ENCODE measurements at regions of chr12 and their contacts with region 1.

Region 1: GRCh38 chr12:109858764-109859163 is 21.6 kb downstream of the GLTP start:
- DNase-seq: no peak
- ATAC-seq: no peak
- H3K4me3 Mint-ChIP-seq: no peak overlapping the region
- H3K27ac Mint-ChIP-seq: no peak overlapping the region
- H3K4me1 Mint-ChIP-seq: peaks cover 4% of the 10 kb centered on the region
- H3K27me3 Mint-ChIP-seq: no peaks in the 10 kb centered on the region
- CTCF ChIP-seq: no peak

Region 2: GRCh38 chr12:109927622-109928021 is 68.9 kb after region 1 on chr12:
- CTCF ChIA-PET with region 1: interaction called, 18 read pairs
- POLR2A ChIA-PET with region 1: no interaction called
- intact Hi-C with region 1: loop called (anchors 1 kb)
- DNase-seq: no peak
- ATAC-seq: no peak
- H3K4me3 Mint-ChIP-seq: no peak overlapping the region
- H3K27ac Mint-ChIP-seq: peak overlapping the region; percentile 73
- H3K4me1 Mint-ChIP-seq: peaks cover 14% of the 10 kb centered on the region
- H3K27me3 Mint-ChIP-seq: no peaks in the 10 kb centered on the region
- CTCF ChIP-seq: no peak

Region 3: DNA sequence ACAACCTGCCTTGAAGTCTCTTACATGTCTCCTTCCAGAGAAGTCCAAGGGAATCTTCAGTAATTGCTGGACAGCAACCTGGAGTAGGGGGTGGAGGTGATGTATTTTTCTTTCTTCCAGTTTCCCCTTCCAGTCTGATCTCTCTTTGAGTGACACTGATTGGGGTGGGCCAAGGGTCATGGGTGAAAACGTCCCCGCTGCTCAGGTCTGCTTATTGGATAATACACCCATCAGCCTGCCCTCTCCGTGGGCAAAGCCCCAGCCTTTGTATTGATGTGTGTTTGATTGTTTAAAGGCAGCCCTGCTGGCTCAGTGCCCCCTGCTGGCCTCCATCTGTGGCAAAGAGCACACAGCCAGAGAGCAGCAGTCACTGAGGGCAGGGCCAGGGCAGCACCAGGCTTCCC is 386.6 kb after region 1 on chr12:
- CTCF ChIA-PET with region 1: interaction called, 3 read pairs
- POLR2A ChIA-PET with region 1: no interaction called
- intact Hi-C with region 1: loop called (anchors 10 kb)
- DNase-seq: peak; percentile 36
- ATAC-seq: peak; percentile 90
- H3K4me3 Mint-ChIP-seq: no peak overlapping the region
- H3K27ac Mint-ChIP-seq: no peak overlapping the region
- H3K4me1 Mint-ChIP-seq: peaks cover 8% of the 10 kb centered on the region
- H3K27me3 Mint-ChIP-seq: peaks cover 2% of the 10 kb centered on the region
- CTCF ChIP-seq: no peak

Measured in activated B cell treated with CpG ODN at 0.5 μM for 24 hours (primary cell).